ENCODE measurements at regions of chr3 and their contacts with region 1.

Region 1: DNA sequence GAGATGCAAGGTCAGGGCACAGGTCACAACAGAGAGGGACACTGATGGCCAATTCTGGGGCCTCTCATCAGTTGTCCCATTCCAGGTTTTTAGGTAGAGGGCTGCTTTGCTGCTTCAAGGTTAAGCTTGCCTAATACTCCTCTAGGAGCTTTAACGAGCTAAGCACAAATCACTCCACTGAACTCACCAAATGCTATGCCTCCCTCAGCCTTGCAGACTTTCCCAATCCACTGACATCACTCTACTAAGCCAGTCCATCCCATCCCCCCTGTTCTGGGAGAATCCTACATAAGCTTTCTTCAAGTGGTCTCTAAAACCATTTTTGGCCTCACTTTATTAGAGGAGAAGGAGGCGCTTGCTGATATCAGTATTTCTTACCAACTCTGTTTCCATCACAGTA is 24.8 kb upstream of the PDCD6IP start:
- DNase-seq: no peak
- H3K4me3 Mint-ChIP-seq: no peak overlapping the region
- H3K27ac Mint-ChIP-seq: no peak overlapping the region
- H3K4me1 Mint-ChIP-seq: no peaks in the 10 kb centered on the region
- H3K27me3 Mint-ChIP-seq: no peaks in the 10 kb centered on the region
- CTCF ChIP-seq: no peak

Region 2: DNA sequence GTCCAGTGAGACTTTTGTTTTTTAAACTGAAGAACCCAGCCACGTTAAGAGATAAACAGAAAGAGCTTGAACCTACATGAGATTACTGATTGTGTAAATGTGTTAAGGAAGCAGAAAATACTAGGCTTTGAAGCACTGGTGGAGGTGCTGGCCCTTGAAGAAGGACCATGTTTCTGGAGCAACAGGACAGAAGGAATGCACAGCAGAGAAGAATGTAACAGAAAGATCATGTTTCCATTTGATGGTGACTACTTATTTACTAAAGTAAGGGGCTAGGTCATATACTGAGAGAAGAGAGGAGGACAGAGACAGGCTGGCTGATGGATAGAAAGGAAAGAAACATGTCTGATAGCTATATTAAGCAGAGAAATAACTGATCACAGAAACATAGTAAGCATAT is 144.4 kb before region 1 on chr3:
- CTCF ChIA-PET with region 1: interaction called, 39 read pairs
- POLR2A ChIA-PET with region 1: interaction called, 4 read pairs
- intact Hi-C with region 1: no loop called
- DNase-seq: no peak
- H3K4me3 Mint-ChIP-seq: no peak overlapping the region
- H3K27ac Mint-ChIP-seq: no peak overlapping the region
- H3K4me1 Mint-ChIP-seq: no peaks in the 10 kb centered on the region
- H3K27me3 Mint-ChIP-seq: no peaks in the 10 kb centered on the region
- CTCF ChIP-seq: no peak

Region 3: GRCh38 chr3:33636125-33636850 is 137.3 kb before region 1 on chr3:
- CTCF ChIA-PET with region 1: interaction called, 45 read pairs
- POLR2A ChIA-PET with region 1: interaction called, 6 read pairs
- intact Hi-C with region 1: loop called (anchors 1 kb)
- DNase-seq: peak; percentile 60
- H3K4me3 Mint-ChIP-seq: no peak overlapping the region
- H3K27ac Mint-ChIP-seq: peak overlapping the region; percentile 2
- H3K4me1 Mint-ChIP-seq: peaks cover 5% of the 10 kb centered on the region
- H3K27me3 Mint-ChIP-seq: no peaks in the 10 kb centered on the region
- CTCF ChIP-seq: peak; percentile 74

Region 4: DNA sequence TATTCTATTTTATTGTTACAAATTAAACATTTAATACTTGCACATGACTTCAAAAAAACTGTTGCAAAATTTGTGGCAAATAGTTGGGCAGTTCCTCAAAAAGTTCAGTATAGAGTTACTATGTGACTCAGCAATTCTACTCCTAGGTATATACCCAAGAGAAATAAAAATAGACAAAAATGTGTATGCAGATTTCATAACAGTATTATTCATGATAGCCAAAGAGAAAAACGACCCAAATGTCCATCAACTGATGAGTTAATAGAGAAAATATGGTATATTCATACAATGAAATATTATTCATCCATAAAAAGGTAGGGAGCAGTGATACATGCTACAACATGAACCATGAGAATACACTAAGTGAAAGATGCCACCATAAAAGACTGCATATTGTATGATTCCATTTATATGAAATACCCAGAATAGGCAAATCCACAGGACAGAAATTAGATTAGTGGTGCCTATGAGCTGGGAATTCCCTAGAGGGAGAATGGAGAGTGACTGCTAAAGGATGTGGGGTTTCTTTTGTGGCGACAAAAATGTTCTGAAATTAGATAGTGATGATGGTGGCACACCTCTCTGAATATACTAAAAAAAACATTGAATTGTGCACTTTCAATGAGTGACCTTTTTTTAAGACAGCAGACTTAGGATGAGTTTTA is 24.0 kb before region 1 on chr3:
- CTCF ChIA-PET with region 1: interaction called, 15 read pairs
- POLR2A ChIA-PET with region 1: interaction called, 4 read pairs
- intact Hi-C with region 1: no loop called
- DNase-seq: peak; percentile 63
- H3K4me3 Mint-ChIP-seq: no peak overlapping the region
- H3K27ac Mint-ChIP-seq: no peak overlapping the region
- H3K4me1 Mint-ChIP-seq: peaks cover 6% of the 10 kb centered on the region
- H3K27me3 Mint-ChIP-seq: no peaks in the 10 kb centered on the region
- CTCF ChIP-seq: no peak

Region 5: DNA sequence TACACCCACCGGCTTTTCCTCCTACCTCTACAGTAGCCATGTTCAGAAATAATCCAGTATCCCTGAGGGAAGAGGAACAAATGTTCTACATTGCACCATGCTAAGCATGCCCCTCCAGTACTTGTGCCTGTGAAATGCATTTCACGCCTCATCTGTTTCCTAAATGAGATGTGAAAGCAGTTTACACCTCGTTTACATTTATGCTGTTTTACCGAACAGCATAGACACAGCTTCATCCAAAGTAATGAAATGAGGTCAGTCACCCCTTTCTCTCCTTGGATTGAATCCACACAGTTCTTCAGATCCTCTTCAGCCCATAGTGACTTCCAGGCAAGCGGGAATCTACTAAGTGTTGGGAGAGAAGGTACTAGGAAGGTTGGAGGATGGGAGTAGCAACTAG is 539.0 kb after region 1 on chr3:
- CTCF ChIA-PET with region 1: no interaction called
- POLR2A ChIA-PET with region 1: no interaction called
- intact Hi-C with region 1: no loop called
- DNase-seq: no peak
- H3K4me3 Mint-ChIP-seq: no peak overlapping the region
- H3K27ac Mint-ChIP-seq: no peak overlapping the region
- H3K4me1 Mint-ChIP-seq: no peaks in the 10 kb centered on the region
- H3K27me3 Mint-ChIP-seq: peaks cover 13% of the 10 kb centered on the region
- CTCF ChIP-seq: no peak